Endothelial cell of umbilical vein (primary cell): ENCODE measurements at regions of chr7 and their contacts with region 1.

Region 1: DNA sequence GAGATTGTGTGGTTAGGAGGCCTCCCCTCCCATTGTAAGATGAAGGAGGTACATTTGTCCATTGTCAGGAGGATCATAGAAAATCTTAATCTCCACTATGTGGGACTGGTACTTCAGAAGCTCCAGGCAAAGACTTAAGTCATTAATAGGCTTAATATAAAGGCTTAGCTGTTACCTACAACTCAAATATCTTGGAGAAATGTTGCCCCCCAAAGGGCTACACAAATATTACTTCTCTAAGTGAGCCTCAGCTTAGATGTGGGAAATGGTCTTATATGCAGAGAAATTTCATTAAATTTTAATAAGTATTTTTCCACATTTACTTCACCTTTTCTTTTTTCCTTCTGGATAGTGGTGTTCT is 27.2 kb downstream of the TAS2R41 start:
- DNase-seq: peak; percentile 78
- H3K4me3 ChIP-seq: no peak overlapping the region
- H3K27ac ChIP-seq: no peak overlapping the region
- H3K4me1 ChIP-seq: peaks cover 19% of the 10 kb centered on the region
- H3K27me3 ChIP-seq: no peaks in the 10 kb centered on the region
- CTCF ChIP-seq: peak in 1 of 2 donors; percentile 15
- POLR2A ChIP-seq: no peak

Region 2: DNA sequence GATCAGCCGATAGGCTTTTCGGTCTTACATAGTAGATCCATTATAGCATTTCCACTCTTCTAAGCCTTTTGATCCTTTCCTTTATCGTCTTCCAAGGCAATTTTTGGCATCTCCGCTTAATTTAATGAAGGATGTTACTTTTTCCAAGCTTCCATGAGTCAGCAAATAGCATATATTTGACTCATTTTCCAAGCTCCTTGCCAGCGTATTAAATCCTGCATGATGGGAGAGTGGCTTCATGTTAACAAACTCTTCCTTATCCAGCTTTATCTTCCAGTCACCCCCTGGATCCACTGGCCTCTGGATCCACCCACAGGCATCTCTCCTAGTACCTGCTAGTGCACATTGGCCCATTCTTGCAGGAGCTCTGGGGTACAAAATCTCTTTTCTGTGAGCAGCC is 491.0 kb before region 1 on chr7:
- CTCF ChIA-PET with region 1: no interaction called
- POLR2A ChIA-PET with region 1: no interaction called
- dilution Hi-C with region 1: no loop called
- intact Hi-C with region 1: loop called (anchors 10 kb)
- DNase-seq: peak; percentile 65
- H3K4me3 ChIP-seq: no peak overlapping the region
- H3K27ac ChIP-seq: no peak overlapping the region
- H3K4me1 ChIP-seq: peaks cover 15% of the 10 kb centered on the region
- H3K27me3 ChIP-seq: no peaks in the 10 kb centered on the region
- CTCF ChIP-seq: no peak
- POLR2A ChIP-seq: no peak

Region 3: DNA sequence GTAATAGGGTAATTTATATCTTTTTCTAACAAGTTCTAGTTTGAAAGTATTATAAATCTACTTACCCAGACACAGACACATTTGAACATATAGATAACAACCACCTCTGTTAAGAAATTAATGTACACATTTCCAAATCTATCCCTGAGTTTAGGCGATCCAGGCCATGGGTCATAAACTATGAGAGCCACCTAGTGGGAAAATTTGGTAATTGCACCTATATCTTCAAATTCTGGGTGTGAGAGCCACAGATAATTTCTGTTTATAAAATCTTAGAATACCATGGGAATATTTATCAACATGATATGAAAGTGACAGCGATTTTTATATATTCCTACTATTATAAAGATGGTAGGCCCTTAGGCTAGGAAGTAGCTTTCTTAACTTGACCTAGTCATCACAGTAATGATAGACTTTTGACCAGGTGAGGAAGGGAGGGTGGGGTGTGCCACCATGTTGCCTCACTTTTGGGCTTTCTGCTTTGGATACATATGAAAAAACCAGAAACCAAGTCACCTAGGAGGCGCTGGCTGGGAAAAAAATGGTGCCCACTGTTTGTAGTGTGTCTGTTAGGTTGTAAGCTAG is 88.3 kb before region 1 on chr7:
- CTCF ChIA-PET with region 1: interaction called, 17 read pairs
- POLR2A ChIA-PET with region 1: no interaction called
- dilution Hi-C with region 1: no loop called
- intact Hi-C with region 1: loop called (anchors 1 kb)
- DNase-seq: peak; percentile 56
- H3K4me3 ChIP-seq: no peak overlapping the region
- H3K27ac ChIP-seq: no peak overlapping the region
- H3K4me1 ChIP-seq: peaks cover 9% of the 10 kb centered on the region
- H3K27me3 ChIP-seq: no peaks in the 10 kb centered on the region
- CTCF ChIP-seq: peak; percentile 41 to 59
- POLR2A ChIP-seq: no peak

Region 4: DNA sequence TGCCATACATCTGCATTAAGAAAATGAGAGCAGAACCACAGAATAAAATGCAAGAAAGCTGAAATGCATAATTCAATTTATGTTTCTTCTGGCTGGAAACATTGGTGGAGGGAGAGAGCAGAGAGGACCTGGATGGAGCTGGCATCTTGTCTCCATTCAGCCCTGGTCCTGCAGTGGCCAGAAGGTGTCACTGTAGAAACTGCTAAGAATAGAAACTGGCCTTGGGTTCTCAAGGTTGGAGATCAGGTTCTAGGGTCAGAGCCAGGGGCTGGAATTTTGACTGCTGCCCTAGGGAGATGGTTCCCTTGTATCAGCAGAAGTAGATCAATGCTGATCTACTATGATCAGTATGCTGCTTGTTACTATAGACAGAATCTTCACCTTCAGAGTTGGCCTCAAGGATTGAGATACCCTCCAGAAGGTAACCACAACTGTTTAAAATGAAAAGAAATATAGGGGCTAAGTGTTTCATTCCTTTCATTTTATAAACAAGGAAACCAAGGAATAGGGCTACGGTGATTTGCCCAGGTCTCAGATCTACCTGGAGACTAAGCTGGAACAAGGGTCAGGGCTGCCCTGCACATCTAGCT is 14.1 kb before region 1 on chr7:
- CTCF ChIA-PET with region 1: interaction called, 36 read pairs
- POLR2A ChIA-PET with region 1: interaction called, 4 read pairs
- dilution Hi-C with region 1: no loop called
- intact Hi-C with region 1: loop called (anchors 1 kb)
- DNase-seq: peak; percentile 58
- H3K4me3 ChIP-seq: no peak overlapping the region
- H3K27ac ChIP-seq: peak overlapping the region; percentile 99
- H3K4me1 ChIP-seq: peaks cover 43% of the 10 kb centered on the region
- H3K27me3 ChIP-seq: no peaks in the 10 kb centered on the region
- CTCF ChIP-seq: peak; percentile 60 to 66
- POLR2A ChIP-seq: no peak

Region 5: GRCh38 chr7:143519411-143520131 is 14.7 kb after region 1 on chr7:
- CTCF ChIA-PET with region 1: interaction called, 15 read pairs
- POLR2A ChIA-PET with region 1: no interaction called
- dilution Hi-C with region 1: no loop called
- intact Hi-C with region 1: loop called (anchors 2 kb)
- DNase-seq: peak; percentile 60
- H3K4me3 ChIP-seq: no peak overlapping the region
- H3K27ac ChIP-seq: no peak overlapping the region
- H3K4me1 ChIP-seq: peaks cover 2% of the 10 kb centered on the region
- H3K27me3 ChIP-seq: no peaks in the 10 kb centered on the region
- CTCF ChIP-seq: no peak
- POLR2A ChIP-seq: no peak